HEK293 (cell line): ENCODE measurements at regions of chr1 and their contacts with region 1.

Region 1: DNA sequence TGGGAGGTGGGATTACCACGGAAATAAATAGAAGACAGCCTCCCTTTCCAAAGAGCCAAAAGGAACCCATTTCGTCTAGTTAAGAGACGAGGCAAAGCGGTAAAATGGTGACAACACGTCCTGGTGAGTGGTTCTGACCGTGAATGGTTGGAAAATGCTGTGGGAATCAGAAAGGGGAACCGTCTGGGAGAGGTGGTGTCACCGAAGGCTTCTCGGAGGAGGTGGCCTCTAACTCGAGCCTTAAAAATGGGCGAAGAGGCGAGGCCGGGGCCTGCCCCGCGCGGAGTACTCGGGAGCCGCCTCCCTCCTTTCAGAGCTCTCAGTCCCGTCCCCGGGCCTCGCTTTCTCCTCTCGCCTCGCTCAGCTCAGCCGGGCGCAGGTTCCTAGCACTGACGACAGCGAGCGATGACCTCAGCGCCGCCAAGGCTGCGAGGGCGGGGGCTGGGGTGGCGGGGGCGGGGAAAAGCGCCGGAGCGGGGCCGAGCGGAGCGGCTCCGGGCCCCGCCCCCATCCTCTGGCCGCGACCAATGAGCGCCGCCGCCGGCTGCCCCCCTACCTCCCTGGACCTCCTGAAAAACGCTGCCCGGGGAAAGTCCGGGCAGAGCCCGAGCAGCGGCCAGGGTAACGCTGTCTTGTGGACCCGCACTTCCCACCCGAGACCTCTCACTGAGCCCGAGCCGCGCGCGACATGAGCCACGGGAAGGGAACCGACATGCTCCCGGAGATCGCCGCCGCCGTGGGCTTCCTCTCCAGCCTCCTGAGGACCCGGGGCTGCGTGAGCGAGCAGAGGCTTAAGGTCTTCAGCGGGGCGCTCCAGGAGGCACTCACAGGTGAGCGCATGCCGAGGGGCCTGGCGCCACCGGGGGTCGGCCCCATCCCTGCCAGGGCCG is at the start of gene BTG2:
- H3K4me3 ChIP-seq: peak within 1 kb of the TSS; percentile 91
- H3K27ac ChIP-seq: peak within 1 kb of the TSS; percentile 95
- H3K4me1 ChIP-seq: peaks cover 16% of the 10 kb centered on the region; the same call in 1 of the 2 replicates
- CTCF ChIP-seq: peak; percentile 28; the same call in 1 of the 2 replicates

Region 2: DNA sequence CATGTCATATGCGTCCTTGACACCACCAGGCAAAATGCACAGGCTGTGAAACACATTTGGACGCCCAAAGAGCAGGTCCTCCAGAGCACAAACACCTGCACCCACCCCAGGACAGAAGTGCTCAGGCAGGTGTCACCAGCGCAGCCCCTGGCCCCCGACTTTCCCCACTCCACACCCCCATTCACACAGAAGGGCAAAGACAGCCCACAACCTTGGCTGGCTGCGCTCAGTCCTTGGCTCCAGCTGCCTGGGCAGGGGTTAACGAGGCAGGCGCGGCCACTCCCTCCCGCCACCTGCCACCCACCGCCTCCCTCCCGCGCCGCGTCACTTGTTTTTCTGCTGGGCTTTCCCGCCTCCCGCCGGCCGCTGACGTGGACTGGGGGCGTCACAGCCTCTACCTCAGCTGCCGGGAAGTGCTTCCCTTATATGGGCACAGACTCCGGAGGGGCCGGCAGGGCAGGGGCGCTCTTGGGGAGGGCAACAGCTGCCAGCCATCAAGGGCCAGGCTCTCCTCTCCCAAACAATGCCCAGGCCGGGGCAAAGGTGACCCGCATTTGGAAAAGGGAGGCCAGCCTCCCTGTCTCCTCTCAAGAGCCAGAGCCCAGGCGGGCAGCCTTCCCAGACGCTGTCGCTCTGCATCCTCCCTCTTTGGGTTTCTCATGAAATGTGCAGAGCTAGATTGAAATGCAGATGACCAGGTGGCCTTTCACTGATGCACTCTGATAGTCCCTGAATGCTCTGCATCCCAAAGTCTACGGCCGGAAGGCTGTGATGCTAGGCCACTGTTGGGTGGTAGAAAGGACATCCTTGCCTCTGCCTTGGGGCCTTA is 14.7 kb before region 1 on chr1:
- CTCF ChIA-PET with region 1: interaction called, 16 read pairs
- POLR2A ChIA-PET with region 1: interaction called, 30 read pairs
- H3K4me3 ChIP-seq: no peak overlapping the region
- H3K27ac ChIP-seq: peak overlapping the region; percentile 20; the same call in 1 of the 2 replicates
- H3K4me1 ChIP-seq: peaks cover 11% of the 10 kb centered on the region
- CTCF ChIP-seq: no peak

Region 3: GRCh38 chr1:203320591-203321272 is 15.6 kb after region 1 on chr1:
- CTCF ChIA-PET with region 1: interaction called, 9 read pairs
- POLR2A ChIA-PET with region 1: interaction called, 90 read pairs
- H3K4me3 ChIP-seq: no peak overlapping the region
- H3K27ac ChIP-seq: no peak overlapping the region; the same call in 1 of the 2 replicates
- H3K4me1 ChIP-seq: peaks cover 36% of the 10 kb centered on the region
- CTCF ChIP-seq: peak; percentile 28; the same call in 1 of the 2 replicates

Region 4: GRCh38 chr1:203326830-203327683 is 21.9 kb after region 1 on chr1:
- CTCF ChIA-PET with region 1: interaction called, 13 read pairs
- POLR2A ChIA-PET with region 1: interaction called, 90 read pairs
- H3K4me3 ChIP-seq: peak overlapping the region; percentile 38
- H3K27ac ChIP-seq: peak overlapping the region; percentile 88
- H3K4me1 ChIP-seq: peaks cover 38% of the 10 kb centered on the region
- CTCF ChIP-seq: no peak

Region 5: DNA sequence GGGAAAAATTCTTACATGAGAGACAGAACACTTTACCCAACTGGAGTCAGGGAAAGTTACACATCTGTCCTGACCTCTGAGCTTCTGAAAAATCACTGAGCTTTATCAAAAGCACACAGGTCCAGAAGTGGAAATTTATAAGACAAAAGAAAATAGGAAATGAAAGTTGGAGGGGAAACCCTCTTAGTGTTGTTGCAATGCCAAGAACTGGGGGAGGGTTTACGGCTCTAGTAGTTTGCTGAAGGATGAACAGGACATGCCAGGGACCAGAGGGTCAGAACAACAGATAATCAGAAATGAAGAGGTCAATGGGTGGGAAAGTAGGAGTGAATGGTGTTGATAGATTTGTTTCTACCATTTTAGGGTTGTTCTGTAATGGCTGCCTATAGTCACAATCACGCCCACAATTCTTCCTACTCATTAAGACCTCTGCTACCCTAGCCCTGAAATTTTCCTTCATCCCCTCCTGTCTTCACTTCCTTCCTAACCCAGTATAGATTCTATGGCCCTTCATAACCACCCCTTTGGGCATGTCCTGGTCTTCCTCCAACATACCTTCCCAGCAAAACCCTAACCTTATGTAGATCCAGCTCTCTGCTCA is 76.1 kb after region 1 on chr1:
- CTCF ChIA-PET with region 1: no interaction called
- POLR2A ChIA-PET with region 1: no interaction called
- H3K4me3 ChIP-seq: no peak overlapping the region
- H3K27ac ChIP-seq: no peak overlapping the region
- H3K4me1 ChIP-seq: no peaks in the 10 kb centered on the region
- CTCF ChIP-seq: no peak